T-cell (primary cell): ENCODE measurements at regions of chr21 and their contacts with region 1.

Region 1: GRCh38 chr21:45592208-45592619 is 50.0 kb upstream of the SLC19A1 start:
- DNase-seq: peak in 34 of 35 experiments; percentile 25 to 91 (median 78)
- ATAC-seq: peak; percentile 67 to 82 (median 71)
- H3K4me3 ChIP-seq: no peak overlapping the region
- H3K4me3 Mint-ChIP-seq: no peak overlapping the region
- H3K27ac ChIP-seq: peak overlapping the region; percentile 62
- H3K27ac Mint-ChIP-seq: no peak overlapping the region
- H3K4me1 ChIP-seq: peaks cover 11 to 45% of the 10 kb centered on the region in 2 experiments
- H3K4me1 Mint-ChIP-seq: peaks cover 10 to 22% (median 18%) of the 10 kb centered on the region in 3 donors
- H3K27me3 ChIP-seq: peaks cover 1 to 23% of the 10 kb centered on the region in 2 experiments
- H3K27me3 Mint-ChIP-seq: peaks cover 0 to 16% of the 10 kb centered on the region in 2 donors

Region 2: DNA sequence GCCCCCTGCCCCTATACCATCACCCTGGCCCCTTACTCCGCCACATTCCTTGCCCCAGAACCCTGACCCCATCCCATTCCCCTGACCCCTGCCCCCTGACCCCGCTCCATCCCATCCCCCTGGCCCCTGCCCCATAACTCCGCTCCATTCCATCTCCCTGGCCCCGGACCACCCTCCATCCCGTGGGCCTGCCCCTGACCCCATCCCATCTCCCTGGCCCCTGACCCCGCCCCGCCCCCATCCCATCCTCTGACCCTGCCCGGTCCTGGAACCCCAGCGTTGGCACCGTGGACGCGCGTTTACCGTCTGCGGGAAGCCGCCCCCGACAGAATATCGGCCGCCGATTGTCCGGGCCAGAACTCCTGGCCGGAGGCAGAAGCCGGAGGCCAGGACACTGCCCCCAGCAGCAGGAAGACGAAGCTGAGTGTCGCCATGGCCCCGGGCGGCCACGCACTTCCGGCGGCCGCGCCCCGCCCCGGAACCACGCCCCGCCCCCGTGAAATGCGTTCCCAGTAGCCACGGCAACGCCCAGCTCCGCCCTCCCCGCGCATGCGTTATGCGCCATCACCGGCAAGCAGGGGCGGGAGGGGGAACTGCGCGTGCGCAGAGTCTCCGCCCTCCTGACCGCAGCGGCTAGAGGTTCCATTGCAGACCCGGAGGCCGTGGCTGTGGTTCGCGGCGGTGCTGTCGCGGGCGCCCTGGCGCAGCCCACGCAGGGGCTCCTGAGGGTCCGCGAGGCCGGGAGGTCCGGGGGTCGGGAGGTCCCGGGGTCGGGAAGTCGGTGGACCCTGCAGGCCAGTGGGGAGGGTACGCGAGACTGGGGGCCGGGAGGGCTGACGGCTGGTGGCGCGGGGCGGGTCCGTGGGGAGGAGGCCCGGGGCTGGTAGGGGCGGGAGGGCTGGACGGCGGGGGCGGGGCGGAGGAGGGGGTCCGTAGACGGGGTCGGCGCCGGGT is 304.5 kb before region 1 on chr21 and contains the start of gene POFUT2:
- CTCF ChIA-PET with region 1: interaction called in 1 of 2 experiments, 11 read pairs
- POLR2A ChIA-PET with region 1: no interaction called
- DNase-seq: peak; percentile 92 to 100 (median 97)
- ATAC-seq: peak; percentile 86 to 88 (median 87)
- H3K4me3 ChIP-seq: peak within 1 kb of the TSS; percentile 57 to 76
- H3K4me3 Mint-ChIP-seq: peak within 1 kb of the TSS; percentile 82 to 88 (median 85)
- H3K27ac ChIP-seq: no peak within 1 kb of the TSS
- H3K27ac Mint-ChIP-seq: peak within 1 kb of the TSS; percentile 72 to 88
- H3K4me1 ChIP-seq: peaks cover 2 to 23% of the 10 kb centered on the region in 2 experiments
- H3K4me1 Mint-ChIP-seq: peaks cover 27 to 31% (median 28%) of the 10 kb centered on the region in 3 donors
- H3K27me3 ChIP-seq: no peaks in the 10 kb centered on the region
- H3K27me3 Mint-ChIP-seq: no peaks in the 10 kb centered on the region
- total RNA-seq, gene POFUT2: 43.0 to 51.3 (median 44.6) TPM

Region 3: GRCh38 chr21:45555551-45556301 is 36.5 kb before region 1 on chr21:
- CTCF ChIA-PET with region 1: interaction called, 3 to 12 read pairs
- POLR2A ChIA-PET with region 1: interaction called in 1 of 2 experiments, 3 read pairs
- DNase-seq: peak in 24 of 35 experiments; percentile 16 to 61 (median 40)
- ATAC-seq: peak; percentile 43 to 62 (median 46)
- H3K4me3 ChIP-seq: peak overlapping the region; percentile 33 to 49
- H3K4me3 Mint-ChIP-seq: peak overlapping the region; percentile 59 to 90 (median 63)
- H3K27ac ChIP-seq: peak overlapping the region; percentile 61
- H3K27ac Mint-ChIP-seq: peak overlapping the region in 1 of 2 donors; percentile 58
- H3K4me1 ChIP-seq: peaks cover 23 to 33% of the 10 kb centered on the region in 2 experiments
- H3K4me1 Mint-ChIP-seq: peaks cover 21 to 26% (median 24%) of the 10 kb centered on the region in 3 donors
- H3K27me3 ChIP-seq: peaks cover 0 to 13% of the 10 kb centered on the region in 2 experiments
- H3K27me3 Mint-ChIP-seq: peaks cover 0 to 2% of the 10 kb centered on the region in 2 donors

Region 4: GRCh38 chr21:45740516-45741357 is 148.5 kb after region 1 on chr21:
- CTCF ChIA-PET with region 1: no interaction called
- POLR2A ChIA-PET with region 1: no interaction called
- DNase-seq: no peak
- ATAC-seq: peak in 1 of 4 experiments; percentile 15
- H3K4me3 ChIP-seq: no peak overlapping the region
- H3K4me3 Mint-ChIP-seq: no peak overlapping the region
- H3K27ac ChIP-seq: no peak overlapping the region
- H3K27ac Mint-ChIP-seq: no peak overlapping the region
- H3K4me1 ChIP-seq: peaks cover 0 to 15% of the 10 kb centered on the region in 2 experiments
- H3K4me1 Mint-ChIP-seq: peaks cover 0 to 9% (median 7%) of the 10 kb centered on the region in 3 donors
- H3K27me3 ChIP-seq: peaks cover 0 to 6% of the 10 kb centered on the region in 2 experiments
- H3K27me3 Mint-ChIP-seq: no peaks in the 10 kb centered on the region

Region 5: DNA sequence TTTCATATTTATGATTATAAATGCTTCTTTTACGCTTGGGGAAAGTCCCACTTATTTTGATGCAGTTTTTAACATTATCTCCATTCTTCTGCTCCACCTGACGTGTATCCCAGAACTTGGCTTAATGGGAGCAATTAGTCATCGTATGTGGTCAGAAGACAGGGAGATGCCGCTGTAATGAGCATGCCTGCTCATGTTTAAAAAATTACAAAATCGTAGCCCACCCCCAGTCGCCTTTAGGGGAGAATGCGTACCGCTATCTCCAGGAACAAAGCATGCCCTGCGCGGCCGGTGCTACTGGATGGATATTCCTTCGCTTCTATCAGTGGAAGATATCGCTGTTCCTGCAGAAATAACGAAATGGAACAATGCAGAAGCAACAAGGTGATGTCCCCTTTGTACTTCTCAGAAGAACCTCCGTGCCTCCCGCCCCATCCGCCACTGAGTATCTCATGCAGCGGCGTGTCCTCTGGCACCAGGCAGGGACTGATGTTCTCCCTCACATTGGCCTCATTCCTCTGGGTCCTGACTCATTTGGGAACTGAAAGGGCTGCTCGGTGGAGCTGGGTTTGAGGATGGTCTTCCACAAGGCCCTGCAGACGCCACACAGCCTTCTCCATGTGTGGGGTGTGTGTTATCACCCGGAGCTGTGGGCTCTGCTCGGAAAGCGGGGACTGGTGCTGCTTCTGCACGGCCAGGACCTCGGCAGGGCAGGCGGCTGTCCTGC is 273.1 kb after region 1 on chr21:
- CTCF ChIA-PET with region 1: no interaction called
- POLR2A ChIA-PET with region 1: no interaction called
- DNase-seq: no peak
- ATAC-seq: no peak
- H3K4me3 ChIP-seq: no peak overlapping the region
- H3K4me3 Mint-ChIP-seq: no peak overlapping the region
- H3K27ac ChIP-seq: no peak overlapping the region
- H3K27ac Mint-ChIP-seq: no peak overlapping the region
- H3K4me1 ChIP-seq: no peaks in the 10 kb centered on the region
- H3K4me1 Mint-ChIP-seq: peaks cover 0 to 5% (median 0%) of the 10 kb centered on the region in 3 donors
- H3K27me3 ChIP-seq: peaks cover 0 to 29% of the 10 kb centered on the region in 2 experiments
- H3K27me3 Mint-ChIP-seq: peaks cover 0 to 1% of the 10 kb centered on the region in 2 donors